CD4-positive, alpha-beta memory T cell (primary cell): ENCODE measurements at regions of chr16 and their contacts with region 1.

Region 1: GRCh38 chr16:30775392-30776188 is 11.4 kb downstream of the ZNF629 start:
- DNase-seq: peak; percentile 42 to 59 (median 53)
- H3K4me3 ChIP-seq: peak overlapping the region; percentile 64 to 81
- H3K4me3 Mint-ChIP-seq: peak overlapping the region; percentile 90 to 94 (median 94)
- H3K27ac ChIP-seq: no peak overlapping the region
- H3K27ac Mint-ChIP-seq: peak overlapping the region in 5 of 7 donors; percentile 48 to 84 (median 76)
- H3K4me1 ChIP-seq: peaks cover 12% of the 10 kb centered on the region
- H3K4me1 Mint-ChIP-seq: peaks cover 14 to 32% (median 22%) of the 10 kb centered on the region in 4 donors
- H3K27me3 ChIP-seq: no peaks in the 10 kb centered on the region
- H3K27me3 Mint-ChIP-seq: no peaks in the 10 kb centered on the region

Region 2: DNA sequence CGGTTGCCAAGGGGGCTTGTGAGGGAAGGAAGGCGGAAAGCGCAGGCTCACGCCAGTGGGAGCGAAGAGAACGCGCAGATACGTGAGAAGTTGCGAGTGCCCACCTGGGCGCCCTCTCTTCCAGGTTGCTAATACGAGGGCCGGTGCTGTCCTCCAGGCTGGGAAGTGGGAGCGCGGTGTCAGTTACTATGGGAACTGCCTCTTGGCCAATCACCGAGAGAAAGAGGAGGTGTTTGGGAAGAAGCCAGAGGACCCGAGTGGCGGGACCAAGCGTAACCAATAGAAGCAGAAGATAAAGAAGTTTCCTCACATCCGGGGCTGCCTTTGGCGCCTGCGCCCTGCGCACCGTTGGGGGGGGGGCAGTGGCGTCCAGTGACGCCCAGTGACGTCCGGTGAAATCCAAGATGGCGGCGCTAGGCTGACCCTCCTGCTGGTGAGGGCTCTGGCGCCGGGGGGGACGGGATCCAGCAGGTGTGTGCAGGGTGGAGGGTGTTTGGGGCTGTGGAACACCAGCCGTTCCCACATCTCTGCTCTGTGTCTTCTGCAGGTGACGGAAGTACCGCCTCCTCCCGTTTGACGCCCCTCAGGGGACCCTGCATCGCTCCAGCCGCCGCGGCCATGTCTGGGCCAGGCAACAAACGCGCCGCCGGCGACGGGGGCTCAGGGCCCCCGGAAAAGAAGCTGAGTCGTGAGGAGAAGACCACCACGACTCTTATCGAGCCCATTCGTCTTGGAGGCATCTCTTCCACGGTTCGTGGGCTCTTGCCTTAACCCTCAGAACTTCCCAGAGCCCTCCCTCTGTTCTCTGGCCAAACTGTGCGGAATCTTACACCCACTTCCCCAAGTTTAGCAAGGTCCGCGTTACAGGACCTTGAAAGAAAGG is 13.4 kb before region 1 on chr16 and contains the starts of genes CFAP119 and RNF40:
- CTCF ChIA-PET with region 1: interaction called, 3 read pairs
- POLR2A ChIA-PET with region 1: interaction called, 19 read pairs
- intact Hi-C with region 1: no loop called
- DNase-seq: peak; percentile 89 to 94 (median 91)
- H3K4me3 ChIP-seq: peak within 1 kb of the TSS; percentile 73 to 97
- H3K4me3 Mint-ChIP-seq: peak within 1 kb of the TSS; percentile 94 to 98 (median 97)
- H3K27ac ChIP-seq: peak within 1 kb of the TSS; percentile 71
- H3K27ac Mint-ChIP-seq: peak within 1 kb of the TSS; percentile 94 to 97 (median 96)
- H3K4me1 ChIP-seq: peaks cover 30% of the 10 kb centered on the region
- H3K4me1 Mint-ChIP-seq: peaks cover 11 to 38% (median 27%) of the 10 kb centered on the region in 4 donors
- H3K27me3 ChIP-seq: no peaks in the 10 kb centered on the region
- H3K27me3 Mint-ChIP-seq: no peaks in the 10 kb centered on the region
- total RNA-seq, gene CFAP119: 2.6 to 3.4 TPM
- total RNA-seq, gene RNF40: 101 to 109 TPM

Region 3: DNA sequence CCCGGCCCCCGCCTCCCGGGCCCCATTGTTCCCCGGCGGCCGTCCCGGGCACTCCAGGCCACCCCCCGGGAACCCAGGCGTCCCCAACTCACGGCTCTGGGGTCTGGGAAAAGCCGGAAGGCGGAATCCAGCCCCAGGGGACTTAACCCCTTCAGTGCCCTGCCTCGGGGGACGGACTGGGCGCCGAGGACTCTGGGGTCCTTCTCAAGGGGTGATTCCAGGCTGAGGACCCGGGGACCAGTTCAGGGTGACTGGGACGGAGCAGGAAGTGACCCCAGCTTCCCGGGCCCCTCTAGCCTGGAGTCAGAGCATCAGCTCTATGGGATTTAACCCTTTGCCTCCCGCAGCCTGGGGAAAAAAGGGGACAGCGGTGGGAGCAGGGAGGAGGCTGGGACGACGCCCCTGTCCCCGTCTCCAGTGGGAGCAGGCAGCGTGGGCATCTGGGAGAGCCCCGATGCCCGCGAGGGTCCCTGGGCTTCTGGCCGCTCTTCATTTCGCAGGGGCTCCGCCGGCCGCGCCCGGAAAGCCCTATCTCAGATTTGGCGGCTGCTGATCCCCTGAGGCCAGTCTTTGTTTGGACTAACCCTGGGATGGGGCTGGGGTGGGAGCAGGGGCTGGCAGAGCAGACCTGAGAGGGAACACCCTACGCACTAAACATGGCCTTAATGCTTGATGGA is 11.5 kb after region 1 on chr16 and contains the start of gene ZNF629:
- CTCF ChIA-PET with region 1: no interaction called
- POLR2A ChIA-PET with region 1: interaction called, 3 read pairs
- intact Hi-C with region 1: loop called (anchors 1 kb)
- DNase-seq: peak in 1 of 5 donors; percentile 12
- H3K4me3 ChIP-seq: peak within 1 kb of the TSS; percentile 36 to 44
- H3K4me3 Mint-ChIP-seq: peak within 1 kb of the TSS; percentile 78 to 85 (median 80)
- H3K27ac ChIP-seq: no peak within 1 kb of the TSS
- H3K27ac Mint-ChIP-seq: peak within 1 kb of the TSS in 3 of 7 donors; percentile 23 to 70 (median 35)
- H3K4me1 ChIP-seq: peaks cover 10% of the 10 kb centered on the region
- H3K4me1 Mint-ChIP-seq: peaks cover 5 to 26% (median 17%) of the 10 kb centered on the region in 4 donors
- H3K27me3 ChIP-seq: peaks cover 5% of the 10 kb centered on the region
- H3K27me3 Mint-ChIP-seq: peaks cover 3 to 5% of the 10 kb centered on the region in 2 donors
- total RNA-seq, gene ZNF629: 4.7 to 5.4 TPM